ENCODE measurements at regions of chr20 and their contacts with region 1.

Region 1: DNA sequence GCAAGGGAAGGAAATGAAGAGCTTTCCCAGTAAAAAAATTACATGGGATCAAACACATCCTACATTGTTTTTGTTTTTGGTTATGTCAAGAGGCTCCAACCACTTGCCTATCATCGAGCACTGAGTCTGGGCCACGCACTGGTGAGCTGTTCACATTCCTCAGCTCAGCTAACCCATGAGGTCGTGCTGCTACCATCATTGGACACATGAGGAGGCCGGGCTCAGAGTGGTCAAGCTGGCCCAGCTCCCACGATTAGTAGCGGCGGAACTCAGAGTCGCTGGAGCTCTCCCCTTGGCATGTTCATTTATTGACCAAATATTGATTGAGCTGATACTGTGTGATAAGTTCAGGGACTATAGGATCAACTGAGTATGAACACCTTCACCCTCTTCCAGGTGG is 164.9 kb downstream of the CDH26 start:
- DNase-seq: no peak
- H3K4me3 Mint-ChIP-seq: no peak overlapping the region
- H3K27ac Mint-ChIP-seq: no peak overlapping the region
- H3K4me1 Mint-ChIP-seq: no peaks in the 10 kb centered on the region
- H3K27me3 Mint-ChIP-seq: peaks cover 92% of the 10 kb centered on the region
- CTCF ChIP-seq: no peak

Region 2: GRCh38 chr20:59765599-59766177 is 357.4 kb before region 1 on chr20:
- CTCF ChIA-PET with region 1: no interaction called
- POLR2A ChIA-PET with region 1: no interaction called
- intact Hi-C with region 1: no loop called
- DNase-seq: peak; percentile 52
- H3K4me3 Mint-ChIP-seq: no peak overlapping the region
- H3K27ac Mint-ChIP-seq: no peak overlapping the region
- H3K4me1 Mint-ChIP-seq: no peaks in the 10 kb centered on the region
- H3K27me3 Mint-ChIP-seq: peaks cover 47% of the 10 kb centered on the region
- CTCF ChIP-seq: no peak

Region 3: GRCh38 chr20:60137629-60138245 is 14.6 kb after region 1 on chr20:
- CTCF ChIA-PET with region 1: interaction called, 10 read pairs
- POLR2A ChIA-PET with region 1: no interaction called
- intact Hi-C with region 1: no loop called
- DNase-seq: peak; percentile 65
- H3K4me3 Mint-ChIP-seq: peak overlapping the region; percentile 80
- H3K27ac Mint-ChIP-seq: no peak overlapping the region
- H3K4me1 Mint-ChIP-seq: peaks cover 1% of the 10 kb centered on the region
- H3K27me3 Mint-ChIP-seq: peaks cover 12% of the 10 kb centered on the region
- CTCF ChIP-seq: peak; percentile 71